ENCODE measurements at regions of chr13 and their contacts with region 1.

Region 1: DNA sequence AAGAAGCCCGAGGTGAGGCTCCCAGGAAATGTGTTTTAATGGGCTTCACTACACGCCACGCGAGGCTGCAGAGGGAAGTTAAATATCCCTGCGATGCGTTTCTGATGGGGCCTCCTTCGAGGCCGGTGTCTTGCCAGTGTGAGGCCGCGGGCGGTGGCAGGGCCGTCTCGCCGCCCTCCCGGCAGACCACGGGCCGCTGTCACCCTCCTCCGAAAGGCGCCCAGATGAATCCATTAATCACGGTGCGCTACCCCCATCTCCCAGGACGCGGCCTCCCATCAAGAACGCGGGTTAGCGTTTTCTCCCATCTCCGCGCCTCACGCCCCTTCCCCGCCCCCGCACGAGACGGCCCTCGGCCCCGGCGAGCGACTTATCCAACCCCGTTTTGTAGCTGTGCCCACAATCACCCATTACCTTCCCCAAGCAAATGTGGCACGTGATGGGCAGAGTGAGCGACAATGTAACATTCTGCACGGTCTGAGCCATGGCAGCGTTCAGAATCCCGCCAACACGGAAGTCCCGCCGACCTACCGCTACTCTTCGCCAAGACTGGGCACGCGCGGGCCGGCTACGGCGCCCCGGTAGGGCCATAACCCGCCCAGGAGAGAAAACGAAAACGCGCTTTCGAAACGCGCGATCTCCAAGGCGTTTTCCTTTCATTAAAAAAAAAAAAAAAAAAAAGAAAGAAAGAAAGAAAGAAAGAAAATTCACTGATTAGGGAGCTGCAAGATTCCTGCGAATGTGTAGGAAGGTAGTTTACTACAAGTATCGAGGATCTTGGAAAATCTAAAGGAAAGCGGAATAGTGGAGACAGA is at the start of gene OBI1:
- DNase-seq: peak; percentile 85
- H3K4me3 Mint-ChIP-seq: peak within 1 kb of the TSS; percentile 99
- H3K27ac Mint-ChIP-seq: peak within 1 kb of the TSS; percentile 98
- H3K4me1 Mint-ChIP-seq: peaks cover 42% of the 10 kb centered on the region
- H3K27me3 Mint-ChIP-seq: no peaks in the 10 kb centered on the region
- total RNA-seq, gene OBI1: 17.7 and 18.1 TPM in 2 replicates

Region 2: DNA sequence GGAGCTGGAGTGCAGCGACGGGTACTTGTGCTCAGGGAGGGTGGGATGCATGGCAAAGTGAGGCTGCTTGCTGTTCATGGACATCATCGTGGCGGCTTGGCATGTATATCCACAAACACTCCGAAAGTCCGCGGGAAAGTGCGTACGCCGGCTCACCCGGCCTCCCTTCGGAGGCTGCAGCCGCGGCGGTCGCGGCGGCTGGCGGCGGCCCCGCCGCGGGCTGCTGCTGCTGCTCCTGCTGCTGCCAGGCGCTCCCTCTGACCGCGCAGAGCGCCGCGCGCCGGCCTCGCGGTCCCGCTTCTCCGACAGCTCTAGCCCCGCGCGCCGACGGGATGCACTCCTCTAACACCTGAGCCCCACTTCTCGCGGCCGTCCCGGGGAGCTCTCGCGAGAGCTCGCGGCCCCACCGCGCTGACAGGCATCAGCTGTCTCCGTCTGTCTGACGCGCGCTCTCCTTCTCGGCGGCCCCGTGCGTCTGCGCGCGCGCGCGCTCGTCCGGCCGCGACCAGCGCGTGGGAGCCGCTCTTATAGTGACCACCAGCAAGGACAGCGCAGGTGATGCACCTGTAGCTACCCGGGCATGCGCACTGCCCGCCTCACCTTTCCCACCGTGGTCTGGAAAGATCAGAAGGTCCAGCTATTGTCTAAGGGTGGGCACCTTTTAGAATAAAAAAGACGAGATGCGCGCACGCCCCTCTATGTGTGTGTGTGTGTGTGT is 55.4 kb before region 1 on chr13 and contains the start of gene POU4F1:
- intact Hi-C with region 1: loop called (anchors 2 kb)
- DNase-seq: peak; percentile 68
- H3K4me3 Mint-ChIP-seq: peak within 1 kb of the TSS; percentile 83
- H3K27ac Mint-ChIP-seq: peak within 1 kb of the TSS; percentile 62
- H3K4me1 Mint-ChIP-seq: peaks cover 38% of the 10 kb centered on the region
- H3K27me3 Mint-ChIP-seq: peaks cover 87% of the 10 kb centered on the region
- total RNA-seq, gene POU4F1: 0.11 TPM in 1 of 2 replicates, not detected in the other

Region 3: GRCh38 chr13:78638216-78638615 is 20.6 kb before region 1 on chr13:
- intact Hi-C with region 1: loop called (anchors 1 kb)
- DNase-seq: no peak
- H3K4me3 Mint-ChIP-seq: no peak overlapping the region
- H3K27ac Mint-ChIP-seq: no peak overlapping the region
- H3K4me1 Mint-ChIP-seq: peaks cover 11% of the 10 kb centered on the region
- H3K27me3 Mint-ChIP-seq: no peaks in the 10 kb centered on the region

Region 4: DNA sequence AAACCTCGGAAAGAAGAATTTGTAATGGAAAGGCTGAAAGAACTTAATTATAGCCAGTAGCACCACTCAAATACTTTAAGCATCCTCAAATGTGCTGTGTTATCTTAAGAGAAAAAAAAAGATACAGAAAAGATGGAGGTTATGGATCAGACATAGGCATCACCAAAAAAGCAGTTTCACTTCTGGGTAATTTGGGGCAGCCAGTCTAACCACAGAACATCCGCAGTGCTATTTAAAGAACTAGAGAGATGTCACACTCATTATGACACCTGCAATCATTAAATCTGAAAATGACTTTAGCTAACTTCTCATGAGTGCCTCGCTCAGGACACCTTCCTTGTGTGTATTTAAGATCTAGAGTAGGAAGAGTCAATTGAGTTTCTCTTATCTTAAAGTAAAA is 535.4 kb after region 1 on chr13:
- intact Hi-C with region 1: loop called (anchors 10 kb)
- DNase-seq: peak; percentile 63
- H3K4me3 Mint-ChIP-seq: no peak overlapping the region
- H3K27ac Mint-ChIP-seq: no peak overlapping the region
- H3K4me1 Mint-ChIP-seq: peaks cover 51% of the 10 kb centered on the region
- H3K27me3 Mint-ChIP-seq: peaks cover 15% of the 10 kb centered on the region

Region 5: GRCh38 chr13:79393564-79394249 is 734.9 kb after region 1 on chr13:
- intact Hi-C with region 1: loop called (anchors 5 kb)
- DNase-seq: peak; percentile 32
- H3K4me3 Mint-ChIP-seq: peak overlapping the region; percentile 70
- H3K27ac Mint-ChIP-seq: peak overlapping the region; percentile 74
- H3K4me1 Mint-ChIP-seq: peaks cover 53% of the 10 kb centered on the region
- H3K27me3 Mint-ChIP-seq: no peaks in the 10 kb centered on the region

Measured in activated T-helper 2 cell treated with anti-CD3 and anti-CD28 coated beads, Interferon-gamma antibody, Interleukin-2, Interleukin-4, amounts not matched to agents 10 μg/mL and 5 μg/mL and 100 μg/mL, durations not matched to agents 14 hours and 24 hours and 36 hours (primary cell).